Dorsolateral prefrontal cortex (tissue), 120 donors: ENCODE measurements at regions of chrX and their contacts with region 1.

Region 1: DNA sequence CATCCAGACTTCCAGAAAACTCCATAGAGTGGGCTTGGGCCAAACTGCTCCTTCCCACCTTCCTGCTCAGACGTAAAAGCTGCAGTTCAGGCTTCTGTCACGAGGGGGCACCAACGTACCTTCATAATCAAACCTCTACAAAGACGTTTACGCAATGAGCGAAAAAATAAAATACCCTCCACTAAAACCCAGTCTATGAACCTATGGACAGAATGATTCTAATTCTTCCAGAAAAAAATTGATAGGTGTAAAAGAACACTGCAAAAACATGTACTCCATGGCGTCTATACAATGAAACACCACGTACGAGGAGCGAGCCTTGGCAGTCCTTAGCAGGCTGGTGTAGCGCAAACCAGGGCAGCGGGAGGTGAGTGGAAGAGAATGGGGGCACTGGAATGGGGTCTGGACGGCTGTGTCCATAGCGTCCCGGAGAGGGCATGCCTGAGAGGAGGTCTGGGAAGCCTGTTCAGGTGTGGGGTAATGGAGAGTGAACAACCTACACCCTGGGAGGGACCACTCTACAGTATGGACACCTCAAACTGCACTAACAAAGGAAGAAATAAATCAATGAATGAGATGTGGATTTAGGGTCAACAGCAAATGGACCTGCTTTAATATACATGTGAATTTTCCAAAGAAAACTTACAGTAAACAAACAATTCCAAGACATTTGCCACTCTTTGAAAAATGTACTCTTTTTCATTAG is 14.4 kb upstream of the RAB40A start:
- DNase-seq: peak; percentile 64 to 91 (median 79)
- H3K4me3 ChIP-seq: peak overlapping the region; percentile 18 to 67 (median 51)
- H3K27ac ChIP-seq: peak overlapping the region in 36 of 59 donors; percentile 4 to 83 (median 52)
- H3K27me3 ChIP-seq: peaks cover 0 to 87% (median 17%) of the 10 kb centered on the region in 45 donors
- CTCF ChIP-seq: peak; percentile 34 to 94 (median 82)

Region 2: DNA sequence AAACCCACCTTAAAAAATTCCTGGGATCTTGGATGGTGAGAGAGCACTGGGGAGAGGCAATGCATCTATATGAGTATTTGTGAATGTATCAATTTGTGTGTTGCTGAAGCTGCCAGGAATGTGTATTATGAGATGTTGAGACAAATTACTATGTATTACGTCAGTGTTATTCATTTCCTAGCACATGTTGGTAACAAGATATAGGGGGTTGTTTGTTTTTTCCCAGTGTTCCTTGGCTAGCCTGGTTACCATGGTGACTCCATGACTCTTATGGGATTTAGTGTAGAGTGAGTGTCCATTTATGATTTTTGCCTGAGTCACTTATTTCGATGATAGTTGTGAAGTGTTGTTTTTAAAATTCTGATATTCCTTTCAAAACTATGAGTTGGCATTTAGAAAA is 80.0 kb before region 1 on chrX:
- intact Hi-C with region 1: no loop called
- DNase-seq: no peak
- H3K4me3 ChIP-seq: no peak overlapping the region
- H3K27ac ChIP-seq: no peak overlapping the region
- H3K27me3 ChIP-seq: peaks cover 0 to 9% (median 0%) of the 10 kb centered on the region in 45 donors
- CTCF ChIP-seq: no peak

Region 3: DNA sequence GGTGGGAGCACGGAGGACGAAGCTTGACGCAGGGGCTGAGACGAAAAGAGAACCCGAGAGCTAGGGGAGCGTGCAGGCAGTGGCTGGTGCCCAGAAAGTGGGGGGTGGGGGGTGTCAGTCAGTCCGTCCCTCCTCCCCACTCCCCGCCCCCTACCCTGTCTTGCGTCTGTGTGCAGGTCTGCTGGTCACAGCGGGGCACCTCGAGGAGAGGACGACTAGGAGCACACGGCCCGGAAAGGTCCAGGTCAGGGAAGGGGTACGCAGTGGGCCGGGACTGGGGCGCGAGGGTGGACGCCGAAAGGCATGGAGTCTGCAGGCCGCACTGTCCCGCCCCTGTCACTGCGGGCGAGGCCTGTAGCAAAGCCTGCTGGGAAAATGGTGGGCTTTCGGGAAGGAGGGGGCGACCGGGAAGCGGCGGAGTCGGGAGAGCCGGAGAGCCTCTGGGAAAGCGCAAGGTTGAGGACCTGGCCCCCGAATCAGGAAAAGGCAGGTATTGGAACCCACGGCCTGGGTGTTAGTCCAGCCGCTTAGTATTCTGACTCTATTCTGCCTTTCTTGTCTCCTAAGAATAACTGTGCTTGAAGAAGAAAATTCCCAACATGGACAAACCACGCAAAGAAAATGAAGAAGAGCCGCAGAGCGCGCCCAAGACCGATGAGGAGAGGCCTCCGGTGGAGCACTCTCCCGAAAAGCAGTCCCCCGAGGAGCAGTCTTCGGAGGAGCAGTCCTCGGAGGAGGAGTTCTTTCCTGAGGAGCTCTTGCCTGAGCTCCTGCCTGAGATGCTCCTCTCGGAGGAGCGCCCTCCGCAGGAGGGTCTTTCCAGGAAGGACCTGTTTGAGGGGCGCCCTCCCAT is 95.9 kb after region 1 on chrX:
- intact Hi-C with region 1: loop called in 1 of 2 experiments (anchors 2 kb)
- DNase-seq: peak; percentile 48 to 77 (median 67)
- H3K4me3 ChIP-seq: peak overlapping the region; percentile 45 to 76 (median 64)
- H3K27ac ChIP-seq: peak overlapping the region; percentile 80 to 98 (median 94)
- H3K27me3 ChIP-seq: peaks cover 0 to 71% (median 17%) of the 10 kb centered on the region in 45 donors
- CTCF ChIP-seq: peak in 55 of 56 donors; percentile 29 to 70 (median 56)

Region 4: GRCh38 chrX:103704863-103705262 is 171.2 kb after region 1 on chrX:
- intact Hi-C with region 1: no loop called
- DNase-seq: peak in 9 of 10 donors; percentile 61 to 93 (median 83)
- H3K4me3 ChIP-seq: no peak overlapping the region
- H3K27ac ChIP-seq: peak overlapping the region in 58 of 59 donors; percentile 57 to 100 (median 88)
- H3K27me3 ChIP-seq: peaks cover 0 to 54% (median 8%) of the 10 kb centered on the region in 45 donors
- CTCF ChIP-seq: no peak

Region 5: DNA sequence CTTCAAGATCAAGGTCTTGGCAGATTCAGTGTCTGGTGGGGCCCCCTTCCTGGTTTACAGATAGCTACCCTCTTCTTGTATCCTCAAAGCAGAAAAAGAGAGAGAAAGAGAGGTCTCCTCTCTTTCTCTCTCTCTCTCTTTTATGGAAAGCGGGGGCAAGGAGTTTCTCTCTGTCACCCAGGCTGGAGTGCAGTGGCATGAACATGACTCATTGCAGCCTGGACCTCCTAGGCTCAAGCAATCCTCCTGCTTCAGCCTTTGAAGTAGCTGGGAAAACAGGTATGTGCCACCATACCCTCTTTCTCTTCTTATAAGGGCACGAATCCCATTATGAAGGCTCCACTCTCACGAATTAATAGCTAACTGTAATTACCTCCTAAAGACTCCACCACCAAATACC is 278.2 kb after region 1 on chrX:
- intact Hi-C with region 1: loop called in 1 of 2 experiments (anchors 5 kb)
- DNase-seq: no peak
- H3K4me3 ChIP-seq: no peak overlapping the region
- H3K27ac ChIP-seq: no peak overlapping the region
- H3K27me3 ChIP-seq: peaks cover 0 to 72% (median 33%) of the 10 kb centered on the region in 45 donors
- CTCF ChIP-seq: no peak

Region 6: DNA sequence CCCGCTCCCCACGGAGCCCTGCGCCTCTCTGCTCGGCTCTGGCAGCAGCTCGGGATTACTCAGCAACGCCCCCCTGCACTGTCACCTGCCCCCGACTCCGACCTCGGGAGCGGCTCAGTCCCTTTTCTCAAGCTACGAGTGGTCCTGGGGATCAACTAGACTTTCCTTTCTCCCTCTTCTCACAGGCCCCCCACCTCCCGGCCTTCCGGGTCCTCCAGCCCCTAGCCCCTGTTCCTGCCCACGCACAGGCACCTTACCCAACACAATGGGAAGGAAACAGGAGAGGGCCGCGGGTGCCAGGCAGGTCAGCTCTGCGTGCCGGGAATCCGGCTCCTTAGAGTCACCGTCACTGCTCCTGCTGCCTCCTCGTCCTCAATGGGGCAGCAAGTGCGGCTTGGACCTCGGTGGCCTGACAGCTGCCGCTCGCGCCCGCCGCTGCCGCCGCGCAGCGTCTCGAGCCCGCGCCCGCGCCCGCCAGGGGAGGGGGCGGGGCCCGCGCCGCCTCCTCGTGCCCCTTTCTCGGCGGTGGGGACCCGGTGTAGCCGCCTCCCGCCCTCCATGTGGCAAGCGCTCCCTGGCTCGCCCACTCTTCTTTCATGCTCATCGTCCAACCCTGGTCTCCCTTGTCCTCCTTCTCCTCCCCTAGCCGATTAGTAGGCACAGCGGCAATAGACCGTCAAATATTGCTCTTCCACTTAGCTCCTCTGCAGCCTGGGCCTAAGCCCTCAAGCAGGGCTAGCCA is 298.3 kb after region 1 on chrX and contains the start of gene RAB9B:
- intact Hi-C with region 1: loop called in 1 of 2 experiments (anchors 5 kb)
- DNase-seq: peak in 9 of 10 donors; percentile 49 to 84 (median 71)
- H3K4me3 ChIP-seq: peak within 1 kb of the TSS; percentile 43 to 78 (median 64)
- H3K27ac ChIP-seq: peak within 1 kb of the TSS in 56 of 59 donors; percentile 8 to 94 (median 78)
- H3K27me3 ChIP-seq: peaks cover 0 to 89% (median 34%) of the 10 kb centered on the region in 45 donors
- CTCF ChIP-seq: peak in 8 of 56 donors; percentile 3 to 38 (median 18)
- total RNA-seq, gene RAB9B: 9.0 to 31.5 (median 20.2) TPM